ENCODE measurements at regions of chr2 and their contacts with region 1.

Region 1: GRCh38 chr2:183248866-183249567 is 124.8 kb downstream of the NUP35 start:
- DNase-seq: peak; percentile 23
- ATAC-seq: peak; percentile 72
- H3K4me3 ChIP-seq: no peak overlapping the region
- H3K27ac ChIP-seq: no peak overlapping the region
- H3K4me1 ChIP-seq: no peaks in the 10 kb centered on the region
- H3K27me3 ChIP-seq: no peaks in the 10 kb centered on the region
- CTCF ChIP-seq: peak; percentile 55
- POLR2A ChIP-seq: no peak
- RAD21 ChIP-seq: peak; percentile 50

Region 2: DNA sequence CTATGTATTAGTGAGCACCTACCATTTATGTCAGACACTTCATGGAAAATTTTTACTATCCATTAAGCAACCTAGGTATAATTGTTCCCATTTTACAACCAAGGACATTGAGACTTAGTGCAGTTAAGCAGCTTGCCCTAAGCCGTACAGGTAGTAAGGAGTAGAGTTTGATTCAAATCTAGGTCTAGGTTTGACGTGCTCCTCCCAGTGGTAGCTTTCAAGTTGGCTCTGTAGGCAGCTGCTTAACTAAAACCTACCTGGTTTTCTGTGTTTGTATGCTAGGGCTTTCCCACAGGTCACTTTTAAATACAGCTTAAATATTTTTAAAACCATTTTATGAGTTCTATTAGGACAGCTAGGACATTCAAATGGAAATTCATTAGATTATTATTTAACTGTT is 55.1 kb before region 1 on chr2:
- CTCF ChIA-PET with region 1: no interaction called
- POLR2A ChIA-PET with region 1: no interaction called
- dilution Hi-C with region 1: no loop called
- in situ Hi-C with region 1: no loop called
- intact Hi-C with region 1: no loop called
- DNase-seq: no peak
- ATAC-seq: no peak
- H3K4me3 ChIP-seq: no peak overlapping the region
- H3K27ac ChIP-seq: no peak overlapping the region
- H3K4me1 ChIP-seq: no peaks in the 10 kb centered on the region
- H3K27me3 ChIP-seq: no peaks in the 10 kb centered on the region
- CTCF ChIP-seq: no peak
- POLR2A ChIP-seq: no peak
- RAD21 ChIP-seq: no peak

Region 3: GRCh38 chr2:183267148-183267827 is 18.3 kb after region 1 on chr2:
- CTCF ChIA-PET with region 1: no interaction called
- POLR2A ChIA-PET with region 1: interaction called, 18 read pairs
- dilution Hi-C with region 1: no loop called
- in situ Hi-C with region 1: no loop called
- intact Hi-C with region 1: no loop called
- DNase-seq: no peak
- ATAC-seq: no peak
- H3K4me3 ChIP-seq: no peak overlapping the region
- H3K27ac ChIP-seq: no peak overlapping the region
- H3K4me1 ChIP-seq: no peaks in the 10 kb centered on the region
- H3K27me3 ChIP-seq: no peaks in the 10 kb centered on the region
- CTCF ChIP-seq: no peak
- POLR2A ChIP-seq: no peak
- RAD21 ChIP-seq: no peak